Naive thymus-derived CD4-positive, alpha-beta T cell (primary cell): ENCODE measurements at regions of chr19 and their contacts with region 1.

Region 1: GRCh38 chr19:32599736-32600157 is 18.8 kb downstream of the PDCD5 start:
- DNase-seq: peak in 7 of 9 donors; percentile 22 to 63 (median 58)
- ATAC-seq: peak; percentile 72
- H3K4me3 ChIP-seq: no peak overlapping the region
- H3K4me3 Mint-ChIP-seq: no peak overlapping the region
- H3K27ac ChIP-seq: no peak overlapping the region
- H3K27ac Mint-ChIP-seq: peak overlapping the region in 2 of 9 donors; percentile 3 to 66
- H3K4me1 ChIP-seq: no peaks in the 10 kb centered on the region
- H3K4me1 Mint-ChIP-seq: peaks cover 5 to 8% (median 7%) of the 10 kb centered on the region in 7 donors
- H3K27me3 ChIP-seq: no peaks in the 10 kb centered on the region
- H3K27me3 Mint-ChIP-seq: no peaks in the 10 kb centered on the region

Region 2: GRCh38 chr19:32642771-32643170 is 43.0 kb after region 1 on chr19:
- CTCF ChIA-PET with region 1: no interaction called
- POLR2A ChIA-PET with region 1: no interaction called
- intact Hi-C with region 1: loop called in 1 of 2 experiments (anchors 2 kb)
- DNase-seq: peak in 8 of 9 donors; percentile 46 to 76 (median 62)
- ATAC-seq: peak; percentile 97
- H3K4me3 ChIP-seq: peak overlapping the region; percentile 44
- H3K4me3 Mint-ChIP-seq: peak overlapping the region; percentile 42 to 80 (median 66)
- H3K27ac ChIP-seq: no peak overlapping the region
- H3K27ac Mint-ChIP-seq: peak overlapping the region; percentile 34 to 90 (median 63)
- H3K4me1 ChIP-seq: peaks cover 20 to 26% of the 10 kb centered on the region in 2 donors
- H3K4me1 Mint-ChIP-seq: peaks cover 9 to 36% (median 27%) of the 10 kb centered on the region in 7 donors
- H3K27me3 ChIP-seq: no peaks in the 10 kb centered on the region
- H3K27me3 Mint-ChIP-seq: no peaks in the 10 kb centered on the region

Region 3: GRCh38 chr19:33118643-33119042 is 518.9 kb after region 1 on chr19:
- CTCF ChIA-PET with region 1: no interaction called
- POLR2A ChIA-PET with region 1: no interaction called
- intact Hi-C with region 1: loop called in 1 of 2 experiments (anchors 1 kb)
- DNase-seq: no peak
- ATAC-seq: no peak
- H3K4me3 ChIP-seq: no peak overlapping the region
- H3K4me3 Mint-ChIP-seq: no peak overlapping the region
- H3K27ac ChIP-seq: no peak overlapping the region
- H3K27ac Mint-ChIP-seq: peak overlapping the region in 1 of 9 donors; percentile 59
- H3K4me1 ChIP-seq: no peaks in the 10 kb centered on the region
- H3K4me1 Mint-ChIP-seq: no peaks in the 10 kb centered on the region
- H3K27me3 ChIP-seq: no peaks in the 10 kb centered on the region
- H3K27me3 Mint-ChIP-seq: no peaks in the 10 kb centered on the region